ENCODE measurements at regions of chr6 and their contacts with region 1.

Region 1: GRCh38 chr6:105424175-105424783 is 21.4 kb upstream of the PREP start:
- DNase-seq: peak; percentile 63
- ATAC-seq: peak; percentile 72
- H3K4me3 ChIP-seq: no peak overlapping the region
- H3K27ac ChIP-seq: no peak overlapping the region
- H3K4me1 ChIP-seq: peaks cover 12% of the 10 kb centered on the region
- H3K27me3 ChIP-seq: no peaks in the 10 kb centered on the region; the same call in 1 of the 2 replicates
- CTCF ChIP-seq: peak; percentile 62
- POLR2A ChIP-seq: no peak
- RAD21 ChIP-seq: peak; percentile 51

Region 2: DNA sequence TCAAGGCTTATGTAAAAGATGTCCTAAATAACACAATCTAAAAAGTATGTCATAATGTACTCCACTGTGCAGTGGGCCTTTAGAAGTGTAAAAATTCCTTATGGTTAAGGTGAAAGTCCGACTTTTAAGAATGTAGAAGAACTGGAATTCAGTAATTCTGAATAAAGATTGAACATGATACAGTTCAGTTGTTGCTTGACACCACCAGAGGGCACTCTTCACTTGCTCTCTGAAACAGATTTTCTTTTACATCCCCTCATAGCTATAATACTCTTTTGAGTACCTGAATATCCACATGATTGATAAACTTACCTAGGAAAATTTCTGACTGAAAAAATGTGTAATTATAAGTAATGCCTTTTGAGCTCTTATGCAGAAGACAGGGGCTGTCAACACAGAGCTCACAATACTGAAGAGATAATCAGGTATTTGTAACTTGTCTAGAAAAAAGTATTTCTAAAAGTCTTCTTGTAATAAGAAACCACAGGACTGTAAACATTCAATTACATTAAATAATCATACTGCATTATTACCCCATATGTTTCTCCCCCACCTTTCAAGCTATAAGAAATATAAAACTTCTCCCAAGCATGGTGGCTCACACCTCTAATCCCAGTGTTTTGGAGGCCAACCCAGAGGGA is 336.6 kb before region 1 on chr6:
- CTCF ChIA-PET with region 1: interaction called, 6 read pairs
- POLR2A ChIA-PET with region 1: no interaction called
- dilution Hi-C with region 1: loop called (anchors 25 kb)
- in situ Hi-C with region 1: no loop called
- intact Hi-C with region 1: loop called (anchors 1 kb)
- DNase-seq: peak; percentile 69
- ATAC-seq: peak; percentile 90
- H3K4me3 ChIP-seq: no peak overlapping the region
- H3K27ac ChIP-seq: no peak overlapping the region
- H3K4me1 ChIP-seq: no peaks in the 10 kb centered on the region
- H3K27me3 ChIP-seq: peaks cover 5% of the 10 kb centered on the region
- CTCF ChIP-seq: peak; percentile 91
- POLR2A ChIP-seq: no peak
- RAD21 ChIP-seq: peak; percentile 94

Region 3: DNA sequence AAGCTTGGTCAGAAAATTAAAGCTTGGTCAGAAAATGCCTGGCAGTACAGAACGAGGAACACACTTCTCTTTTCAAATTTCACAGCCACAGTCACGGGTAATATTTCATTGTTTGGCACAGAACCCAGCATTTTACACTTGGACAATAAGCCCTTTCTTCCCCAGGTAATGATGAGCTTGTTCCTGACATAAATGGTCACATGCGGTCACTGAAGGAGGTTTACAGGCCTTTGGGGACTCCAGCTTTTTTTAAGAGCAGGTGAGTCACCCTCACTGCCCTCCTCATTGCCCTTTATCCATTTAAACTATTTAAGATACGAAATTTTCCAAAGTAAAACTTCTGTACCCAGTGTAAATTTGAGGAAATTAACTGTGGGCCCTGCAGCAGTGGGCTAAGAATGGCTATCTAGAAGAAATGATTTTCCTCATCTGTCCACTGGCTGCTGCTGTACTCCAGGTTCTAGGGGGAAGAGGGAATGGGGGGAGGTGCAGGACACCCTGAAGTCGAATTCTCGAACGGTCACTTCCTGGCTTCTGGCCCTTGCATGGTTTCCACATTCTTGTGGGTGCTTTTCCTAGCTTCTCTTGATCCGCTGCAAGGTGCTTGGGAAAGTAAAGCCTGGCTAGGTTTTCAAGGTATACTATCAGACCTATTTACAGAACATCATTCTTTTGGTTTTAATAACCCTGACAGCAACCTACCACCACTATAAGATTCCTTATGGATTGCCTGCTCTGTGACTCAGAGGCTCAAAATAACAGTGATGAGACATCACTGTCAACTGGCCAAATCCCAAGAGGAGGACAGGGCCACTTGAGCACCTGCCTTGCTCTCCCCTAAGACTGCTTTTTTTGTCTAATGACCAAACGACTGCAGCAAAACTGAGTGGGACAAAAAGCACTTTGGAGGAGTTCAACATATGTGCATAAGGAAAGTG is 97.2 kb before region 1 on chr6:
- CTCF ChIA-PET with region 1: no interaction called
- POLR2A ChIA-PET with region 1: no interaction called
- dilution Hi-C with region 1: no loop called
- in situ Hi-C with region 1: no loop called
- intact Hi-C with region 1: no loop called
- DNase-seq: peak; percentile 83
- ATAC-seq: peak; percentile 68
- H3K4me3 ChIP-seq: no peak overlapping the region
- H3K27ac ChIP-seq: no peak overlapping the region
- H3K4me1 ChIP-seq: peaks cover 3% of the 10 kb centered on the region; the same call in 1 of the 2 replicates
- H3K27me3 ChIP-seq: no peaks in the 10 kb centered on the region
- CTCF ChIP-seq: no peak
- POLR2A ChIP-seq: no peak
- RAD21 ChIP-seq: no peak

Region 4: GRCh38 chr6:106244931-106245330 is 820.7 kb after region 1 on chr6:
- CTCF ChIA-PET with region 1: no interaction called
- POLR2A ChIA-PET with region 1: no interaction called
- dilution Hi-C with region 1: no loop called
- in situ Hi-C with region 1: no loop called
- intact Hi-C with region 1: no loop called
- DNase-seq: no peak
- ATAC-seq: no peak
- H3K4me3 ChIP-seq: no peak overlapping the region
- H3K27ac ChIP-seq: no peak overlapping the region
- H3K4me1 ChIP-seq: peaks cover 2% of the 10 kb centered on the region; the same call in 1 of the 2 replicates
- H3K27me3 ChIP-seq: no peaks in the 10 kb centered on the region
- CTCF ChIP-seq: no peak
- POLR2A ChIP-seq: no peak
- RAD21 ChIP-seq: no peak

Measured in IMR-90 (cell line).